B cell (primary cell): ENCODE measurements at regions of chr2 and their contacts with region 1.

Region 1: GRCh38 chr2:224938651-224939182 is 103.6 kb downstream of the DOCK10 start:
- DNase-seq: peak; percentile 45
- ATAC-seq: peak; percentile 50
- H3K4me3 ChIP-seq: peak overlapping the region in 1 of 5 experiments; percentile 26
- H3K4me3 Mint-ChIP-seq: peak overlapping the region; percentile 70
- H3K27ac ChIP-seq: peak overlapping the region; percentile 60 to 80
- H3K27ac Mint-ChIP-seq: peak overlapping the region; percentile 91
- H3K4me1 ChIP-seq: peaks cover 52 to 61% of the 10 kb centered on the region in 2 donors
- H3K4me1 Mint-ChIP-seq: peaks cover 80% of the 10 kb centered on the region
- H3K27me3 ChIP-seq: no peaks in the 10 kb centered on the region
- H3K27me3 Mint-ChIP-seq: no peaks in the 10 kb centered on the region
- CTCF ChIP-seq: no peak

Region 2: GRCh38 chr2:224832207-224832606 is 106.5 kb before region 1 on chr2:
- CTCF ChIA-PET with region 1: no interaction called
- POLR2A ChIA-PET with region 1: no interaction called
- intact Hi-C with region 1: no loop called
- DNase-seq: no peak
- ATAC-seq: no peak
- H3K4me3 ChIP-seq: no peak overlapping the region
- H3K4me3 Mint-ChIP-seq: no peak overlapping the region
- H3K27ac ChIP-seq: no peak overlapping the region
- H3K27ac Mint-ChIP-seq: no peak overlapping the region
- H3K4me1 ChIP-seq: no peaks in the 10 kb centered on the region
- H3K4me1 Mint-ChIP-seq: no peaks in the 10 kb centered on the region
- H3K27me3 ChIP-seq: no peaks in the 10 kb centered on the region
- H3K27me3 Mint-ChIP-seq: no peaks in the 10 kb centered on the region
- CTCF ChIP-seq: no peak

Region 3: DNA sequence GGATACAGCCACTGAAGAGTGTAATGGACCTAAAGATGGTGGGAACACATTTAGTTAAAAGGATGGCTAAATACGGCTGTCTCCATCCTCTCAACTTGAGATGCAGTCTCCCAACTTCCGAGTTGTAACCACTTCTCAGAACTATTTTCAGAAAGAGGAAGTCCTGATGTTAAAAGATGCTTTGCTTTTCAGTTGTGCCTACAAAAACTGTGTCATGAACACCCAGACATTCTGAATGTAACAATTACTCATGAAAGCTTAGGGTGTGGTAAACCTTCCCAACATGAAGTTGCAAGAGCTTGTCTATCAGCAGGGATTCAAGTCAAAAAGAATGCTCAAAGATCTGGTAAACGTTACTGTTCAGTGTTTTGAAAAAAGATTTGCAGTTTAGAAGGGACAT is 44.4 kb before region 1 on chr2:
- CTCF ChIA-PET with region 1: no interaction called
- POLR2A ChIA-PET with region 1: no interaction called
- intact Hi-C with region 1: loop called (anchors 5 kb)
- DNase-seq: peak; percentile 75
- ATAC-seq: peak; percentile 78
- H3K4me3 ChIP-seq: peak overlapping the region in 2 of 5 experiments; percentile 1 to 16
- H3K4me3 Mint-ChIP-seq: peak overlapping the region; percentile 77
- H3K27ac ChIP-seq: peak overlapping the region; percentile 74 to 86
- H3K27ac Mint-ChIP-seq: peak overlapping the region; percentile 93
- H3K4me1 ChIP-seq: peaks cover 25 to 26% of the 10 kb centered on the region in 2 donors
- H3K4me1 Mint-ChIP-seq: peaks cover 48% of the 10 kb centered on the region
- H3K27me3 ChIP-seq: no peaks in the 10 kb centered on the region
- H3K27me3 Mint-ChIP-seq: no peaks in the 10 kb centered on the region
- CTCF ChIP-seq: no peak

Region 4: DNA sequence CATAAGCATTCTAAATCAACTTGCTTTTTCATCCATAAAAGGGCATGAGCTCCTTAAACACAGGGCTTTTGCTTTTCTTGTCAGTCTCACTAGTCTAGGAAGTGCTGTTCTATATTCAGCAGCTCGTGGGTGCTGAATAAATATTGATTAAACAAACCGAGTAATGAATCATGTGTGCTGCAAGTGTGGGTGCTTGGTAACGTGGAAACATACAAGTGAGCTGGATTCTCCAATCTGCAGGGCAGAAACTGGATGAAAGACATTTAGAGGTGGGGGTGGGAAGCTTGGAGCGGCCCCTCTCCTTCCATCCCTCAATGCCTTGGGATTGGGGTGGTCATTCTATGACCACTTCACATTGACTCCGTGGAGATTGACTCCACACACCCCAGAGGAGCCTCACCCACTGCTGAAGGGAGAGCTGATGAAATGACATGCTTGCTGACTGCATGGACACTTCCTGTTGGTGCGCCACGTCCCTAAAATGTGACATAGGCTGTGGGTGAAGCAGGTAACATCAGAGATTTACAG is 11.0 kb before region 1 on chr2:
- CTCF ChIA-PET with region 1: interaction called, 5 read pairs
- POLR2A ChIA-PET with region 1: interaction called, 6 read pairs
- intact Hi-C with region 1: loop called (anchors 1 kb)
- DNase-seq: no peak
- ATAC-seq: no peak
- H3K4me3 ChIP-seq: no peak overlapping the region
- H3K4me3 Mint-ChIP-seq: peak overlapping the region; percentile 4
- H3K27ac ChIP-seq: peak overlapping the region; percentile 38 to 43
- H3K27ac Mint-ChIP-seq: peak overlapping the region; percentile 78
- H3K4me1 ChIP-seq: peaks cover 86 to 87% of the 10 kb centered on the region in 2 donors
- H3K4me1 Mint-ChIP-seq: peaks cover 94% of the 10 kb centered on the region
- H3K27me3 ChIP-seq: no peaks in the 10 kb centered on the region
- H3K27me3 Mint-ChIP-seq: no peaks in the 10 kb centered on the region
- CTCF ChIP-seq: no peak

Region 5: GRCh38 chr2:224952936-224953657 is 14.4 kb after region 1 on chr2:
- CTCF ChIA-PET with region 1: interaction called, 10 read pairs
- POLR2A ChIA-PET with region 1: interaction called, 9 read pairs
- intact Hi-C with region 1: loop called (anchors 2 kb)
- DNase-seq: peak; percentile 79
- ATAC-seq: peak; percentile 89
- H3K4me3 ChIP-seq: no peak overlapping the region
- H3K4me3 Mint-ChIP-seq: peak overlapping the region; percentile 50
- H3K27ac ChIP-seq: peak overlapping the region; percentile 19 to 52
- H3K27ac Mint-ChIP-seq: peak overlapping the region; percentile 85
- H3K4me1 ChIP-seq: peaks cover 63 to 64% of the 10 kb centered on the region in 2 donors
- H3K4me1 Mint-ChIP-seq: peaks cover 86% of the 10 kb centered on the region
- H3K27me3 ChIP-seq: no peaks in the 10 kb centered on the region
- H3K27me3 Mint-ChIP-seq: no peaks in the 10 kb centered on the region
- CTCF ChIP-seq: no peak

Region 6: DNA sequence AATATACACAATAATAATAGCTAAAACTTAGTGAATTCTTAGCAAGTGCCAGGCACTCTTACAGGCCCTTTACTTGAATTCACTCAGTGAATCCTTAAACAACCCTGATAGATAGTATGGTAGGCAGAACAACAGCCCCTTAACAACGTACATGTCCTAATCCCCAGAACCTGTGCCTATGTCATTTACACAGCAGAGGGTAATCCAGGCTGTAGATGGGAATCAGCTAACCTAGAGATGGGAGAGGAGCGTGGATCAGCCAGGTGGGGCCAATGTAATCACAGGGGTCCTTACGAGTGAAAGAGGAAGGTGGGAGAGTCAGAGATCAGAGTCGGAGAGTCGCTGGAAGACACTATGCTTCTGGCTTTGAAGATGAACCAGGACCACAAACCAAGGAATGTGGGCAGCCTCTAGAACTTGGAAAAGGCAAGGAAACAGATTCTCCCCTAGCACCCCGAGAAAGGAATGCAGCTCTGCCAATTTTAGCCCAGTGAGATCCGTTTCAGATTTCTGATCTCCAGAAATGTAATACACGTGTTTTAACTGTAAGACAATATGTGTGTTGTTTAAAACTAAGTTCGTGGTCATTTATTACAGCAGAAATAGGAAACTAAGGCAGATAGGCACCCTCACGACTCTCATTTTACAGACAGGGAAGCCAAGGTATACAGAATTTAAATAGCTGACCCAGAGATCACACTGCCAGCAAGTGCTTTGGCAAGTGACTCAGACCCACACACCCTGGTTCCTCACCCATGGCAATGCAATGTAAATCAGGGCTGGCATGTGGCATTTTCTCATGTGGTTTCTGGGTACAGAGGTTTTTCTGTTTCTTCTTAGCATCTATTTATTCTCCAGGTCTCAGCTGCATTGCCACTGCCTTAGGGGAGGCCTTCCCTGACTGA is 34.6 kb after region 1 on chr2:
- CTCF ChIA-PET with region 1: interaction called, 4 read pairs
- POLR2A ChIA-PET with region 1: interaction called, 4 read pairs
- intact Hi-C with region 1: loop called (anchors 5 kb)
- DNase-seq: peak; percentile 59
- ATAC-seq: peak; percentile 77
- H3K4me3 ChIP-seq: peak overlapping the region in 1 of 5 experiments; percentile 15
- H3K4me3 Mint-ChIP-seq: peak overlapping the region; percentile 75
- H3K27ac ChIP-seq: peak overlapping the region; percentile 76 to 79
- H3K27ac Mint-ChIP-seq: peak overlapping the region; percentile 96
- H3K4me1 ChIP-seq: peaks cover 47 to 49% of the 10 kb centered on the region in 2 donors
- H3K4me1 Mint-ChIP-seq: peaks cover 73% of the 10 kb centered on the region
- H3K27me3 ChIP-seq: no peaks in the 10 kb centered on the region
- H3K27me3 Mint-ChIP-seq: no peaks in the 10 kb centered on the region
- CTCF ChIP-seq: no peak